Prostate gland (tissue), 2 donors: ENCODE measurements at regions of chr17 and their contacts with region 1.

Region 1: DNA sequence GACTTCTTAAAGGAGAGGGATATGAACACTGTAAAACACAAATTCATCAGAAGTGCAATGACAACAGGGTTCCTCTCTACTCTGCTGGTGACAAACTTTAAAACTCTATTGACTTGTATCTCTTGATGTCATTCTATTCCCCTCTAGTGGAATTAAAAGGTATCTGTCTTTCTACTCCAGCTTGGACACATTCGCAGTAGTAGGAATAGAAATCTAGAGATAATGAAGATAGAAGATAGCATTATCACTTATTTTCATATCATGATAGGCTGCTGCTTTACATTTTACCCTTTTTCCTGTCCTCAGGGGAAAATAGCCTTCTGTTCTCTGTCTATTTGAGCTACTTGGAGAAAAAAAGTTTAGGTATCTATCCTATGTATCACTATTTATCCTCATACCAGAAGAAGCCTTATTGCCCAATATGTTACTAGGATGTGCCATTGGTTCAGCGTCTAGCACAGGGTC is 209.6 kb upstream of the CACNG5 start:
- DNase-seq: no peak
- H3K4me3 ChIP-seq: no peak overlapping the region
- H3K27ac ChIP-seq: no peak overlapping the region
- H3K4me1 ChIP-seq: no peaks in the 10 kb centered on the region
- H3K27me3 ChIP-seq: no peaks in the 10 kb centered on the region
- CTCF ChIP-seq: peak in 3 of 4 experiments; percentile 44 to 77 (median 71)
- POLR2A ChIP-seq: no peak

Region 2: DNA sequence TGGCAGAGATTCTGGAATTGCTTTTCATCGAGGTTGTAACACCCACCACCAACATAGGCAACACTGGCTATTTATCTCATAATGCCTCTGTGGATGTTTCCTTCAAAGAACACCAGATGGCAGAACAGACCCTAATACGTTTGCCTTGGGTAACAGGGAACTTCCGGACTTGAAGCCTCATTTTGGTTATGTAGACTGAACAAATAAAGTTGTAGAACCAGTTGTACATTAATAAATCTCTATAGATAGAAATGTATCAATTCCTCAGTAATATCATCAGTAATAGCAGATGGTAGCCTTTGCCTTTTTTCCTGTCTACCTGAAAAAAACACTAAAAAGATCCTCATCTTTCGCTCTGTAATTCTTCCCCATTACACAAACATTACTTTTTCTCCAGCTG is 370.2 kb before region 1 on chr17:
- intact Hi-C with region 1: loop called (anchors 5 kb)
- DNase-seq: peak; percentile 46
- H3K4me3 ChIP-seq: no peak overlapping the region
- H3K27ac ChIP-seq: no peak overlapping the region
- H3K4me1 ChIP-seq: no peaks in the 10 kb centered on the region
- H3K27me3 ChIP-seq: no peaks in the 10 kb centered on the region
- CTCF ChIP-seq: peak; percentile 47 to 83 (median 74)
- POLR2A ChIP-seq: no peak

Region 3: DNA sequence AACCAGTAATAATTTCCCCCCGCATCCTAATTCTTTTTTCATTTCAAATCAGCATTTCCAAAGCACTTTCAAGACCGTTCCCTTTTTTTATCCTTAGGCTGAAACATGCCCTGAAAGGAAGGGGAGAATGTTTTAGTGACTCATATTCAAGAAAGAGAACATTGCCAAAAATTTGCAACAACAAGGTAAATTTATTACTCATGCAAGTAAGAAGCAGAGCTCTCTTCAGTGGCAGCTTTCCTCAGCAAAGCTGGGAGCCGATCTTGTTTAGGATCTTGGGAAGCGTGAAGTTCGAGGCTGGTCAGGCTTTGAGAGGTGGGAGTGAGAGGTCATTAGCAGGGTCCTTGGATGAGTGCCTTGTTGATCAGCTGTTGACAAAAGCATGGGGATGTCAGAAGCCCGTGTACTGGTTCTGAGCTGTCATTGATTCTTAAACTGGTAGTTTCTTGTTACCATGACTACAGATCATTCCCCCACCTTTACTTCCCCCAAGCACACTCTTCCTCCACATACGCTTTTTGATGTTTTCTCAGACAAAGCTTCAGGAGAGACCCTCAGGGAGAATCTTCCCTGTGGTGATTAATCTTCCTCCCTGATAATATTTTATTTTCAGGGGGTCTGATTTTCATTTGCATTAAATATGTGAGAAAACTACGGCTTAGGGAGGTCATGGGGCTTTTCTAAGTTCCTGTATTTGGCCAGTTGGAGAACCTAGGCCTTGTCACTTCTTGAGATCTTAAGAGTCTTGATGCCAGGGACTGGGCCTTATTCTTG is 193.2 kb before region 1 on chr17:
- intact Hi-C with region 1: loop called (anchors 5 kb)
- DNase-seq: no peak
- H3K4me3 ChIP-seq: no peak overlapping the region
- H3K27ac ChIP-seq: peak overlapping the region in 1 of 2 donors; percentile 37
- H3K4me1 ChIP-seq: no peaks in the 10 kb centered on the region
- H3K27me3 ChIP-seq: no peaks in the 10 kb centered on the region
- CTCF ChIP-seq: no peak
- POLR2A ChIP-seq: no peak

Region 4: GRCh38 chr17:66523378-66524200 is 101.8 kb before region 1 on chr17:
- intact Hi-C with region 1: loop called (anchors 10 kb)
- DNase-seq: no peak
- H3K4me3 ChIP-seq: no peak overlapping the region
- H3K27ac ChIP-seq: peak overlapping the region in 1 of 2 donors; percentile 28
- H3K4me1 ChIP-seq: peaks cover 4% of the 10 kb centered on the region
- H3K27me3 ChIP-seq: no peaks in the 10 kb centered on the region
- CTCF ChIP-seq: no peak
- POLR2A ChIP-seq: no peak

Region 5: GRCh38 chr17:66567234-66568170 is 57.8 kb before region 1 on chr17:
- intact Hi-C with region 1: loop called (anchors 5 kb)
- DNase-seq: peak; percentile 57
- H3K4me3 ChIP-seq: no peak overlapping the region
- H3K27ac ChIP-seq: peak overlapping the region; percentile 7 to 19
- H3K4me1 ChIP-seq: no peaks in the 10 kb centered on the region
- H3K27me3 ChIP-seq: no peaks in the 10 kb centered on the region
- CTCF ChIP-seq: peak; percentile 10 to 89 (median 66)
- POLR2A ChIP-seq: no peak

Region 6: GRCh38 chr17:66673668-66674315 is 48.4 kb after region 1 on chr17:
- intact Hi-C with region 1: loop called (anchors 5 kb)
- DNase-seq: peak; percentile 73
- H3K4me3 ChIP-seq: no peak overlapping the region
- H3K27ac ChIP-seq: peak overlapping the region; percentile 89 to 94
- H3K4me1 ChIP-seq: peaks cover 9% of the 10 kb centered on the region
- H3K27me3 ChIP-seq: no peaks in the 10 kb centered on the region
- CTCF ChIP-seq: peak; percentile 41 to 88 (median 78)
- POLR2A ChIP-seq: no peak